PC-3 (cell line): ENCODE measurements at regions of chr9 and their contacts with region 1.

Region 1: DNA sequence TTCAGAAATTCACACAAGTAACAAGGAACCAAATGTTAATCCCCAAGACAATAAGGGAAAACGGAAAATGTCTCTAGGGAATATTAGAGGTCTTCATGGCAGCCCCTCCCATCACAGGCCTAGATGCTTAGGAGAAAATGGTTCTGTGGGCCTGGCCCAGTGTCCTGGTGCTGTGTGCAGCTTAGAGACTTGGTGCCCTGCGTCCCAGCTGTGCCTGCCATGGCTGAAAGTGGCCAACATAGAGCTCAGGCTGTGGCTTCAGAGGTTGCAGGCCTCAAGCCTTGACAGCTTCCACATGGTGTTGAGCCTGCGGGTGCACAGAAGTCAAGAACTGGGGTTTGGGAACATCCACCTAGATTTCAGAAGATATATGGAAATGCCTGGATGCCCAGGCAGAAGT is 942.3 kb downstream of the PTPRD start:
- DNase-seq: no peak
- ATAC-seq: no peak
- H3K4me3 ChIP-seq: no peak overlapping the region
- H3K27ac ChIP-seq: no peak overlapping the region
- H3K4me1 ChIP-seq: no peaks in the 10 kb centered on the region
- H3K27me3 ChIP-seq: no peaks in the 10 kb centered on the region
- CTCF ChIP-seq: no peak

Region 2: GRCh38 chr9:9752722-9753121 is 82.3 kb after region 1 on chr9:
- CTCF ChIA-PET with region 1: no interaction called
- POLR2A ChIA-PET with region 1: no interaction called
- intact Hi-C with region 1: loop called (anchors 5 kb)
- DNase-seq: no peak
- ATAC-seq: no peak
- H3K4me3 ChIP-seq: no peak overlapping the region
- H3K27ac ChIP-seq: no peak overlapping the region
- H3K4me1 ChIP-seq: no peaks in the 10 kb centered on the region
- H3K27me3 ChIP-seq: no peaks in the 10 kb centered on the region
- CTCF ChIP-seq: no peak